ENCODE measurements at regions of chr1 and their contacts with region 1.

Region 1: GRCh38 chr1:172002725-172003345 is 161.5 kb downstream of the DNM3 start:
- DNase-seq: peak; percentile 40
- H3K4me3 ChIP-seq: no peak overlapping the region
- H3K27ac ChIP-seq: no peak overlapping the region
- H3K4me1 ChIP-seq: peaks cover 45% of the 10 kb centered on the region
- H3K27me3 ChIP-seq: no peaks in the 10 kb centered on the region
- CTCF ChIP-seq: peak; percentile 76 to 80

Region 2: DNA sequence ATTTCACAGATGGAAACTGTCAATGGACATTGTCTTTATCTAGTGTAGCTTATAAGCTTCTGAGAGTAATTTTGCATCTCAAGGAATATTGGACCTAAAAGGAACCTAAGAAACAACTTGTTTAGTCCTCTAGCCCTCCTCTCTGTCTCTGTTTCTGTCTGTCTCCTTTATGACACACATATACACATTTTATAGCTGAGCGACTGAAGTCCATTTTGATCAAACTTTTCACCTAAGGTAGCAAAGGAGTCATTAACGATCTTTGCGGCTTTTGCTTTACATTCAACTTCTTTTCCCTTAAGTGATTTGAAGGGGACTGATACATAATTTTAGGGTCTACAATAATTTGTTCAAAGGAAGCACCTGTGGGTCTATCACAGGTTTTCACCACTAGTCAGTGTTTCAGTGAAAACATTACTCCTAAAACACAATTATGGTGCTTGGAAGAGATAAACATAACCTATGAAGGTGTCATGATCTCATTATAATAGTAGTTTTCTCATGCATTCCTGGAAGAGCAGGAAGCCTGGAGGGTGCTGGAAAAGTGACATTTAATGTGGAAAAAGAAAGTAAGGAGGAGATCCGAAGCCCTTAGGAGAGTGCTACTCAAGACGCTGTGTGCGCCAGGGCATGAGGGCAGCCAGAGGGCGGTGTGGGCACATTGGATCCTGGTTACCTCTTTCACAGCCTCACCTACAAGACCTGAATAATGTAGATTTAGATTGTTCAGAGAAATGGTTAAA is 87.1 kb after region 1 on chr1:
- CTCF ChIA-PET with region 1: interaction called, 6 read pairs
- dilution Hi-C with region 1: no loop called
- in situ Hi-C with region 1: no loop called
- intact Hi-C with region 1: loop called (anchors 1 kb)
- DNase-seq: peak; percentile 53
- H3K4me3 ChIP-seq: no peak overlapping the region
- H3K27ac ChIP-seq: no peak overlapping the region
- H3K4me1 ChIP-seq: no peaks in the 10 kb centered on the region
- H3K27me3 ChIP-seq: no peaks in the 10 kb centered on the region
- CTCF ChIP-seq: peak; percentile 92 to 96

Region 3: GRCh38 chr1:172246521-172247390 is 243.9 kb after region 1 on chr1:
- CTCF ChIA-PET with region 1: no interaction called
- dilution Hi-C with region 1: no loop called
- in situ Hi-C with region 1: no loop called
- intact Hi-C with region 1: no loop called
- DNase-seq: no peak
- H3K4me3 ChIP-seq: no peak overlapping the region
- H3K27ac ChIP-seq: no peak overlapping the region
- H3K4me1 ChIP-seq: no peaks in the 10 kb centered on the region
- H3K27me3 ChIP-seq: no peaks in the 10 kb centered on the region
- CTCF ChIP-seq: no peak

Region 4: GRCh38 chr1:172373864-172374263 is 371.0 kb after region 1 on chr1:
- CTCF ChIA-PET with region 1: interaction called, 15 read pairs
- dilution Hi-C with region 1: no loop called
- in situ Hi-C with region 1: no loop called
- intact Hi-C with region 1: no loop called
- DNase-seq: peak; percentile 35
- H3K4me3 ChIP-seq: no peak overlapping the region
- H3K27ac ChIP-seq: no peak overlapping the region
- H3K4me1 ChIP-seq: peaks cover 7% of the 10 kb centered on the region
- H3K27me3 ChIP-seq: no peaks in the 10 kb centered on the region
- CTCF ChIP-seq: no peak

Region 5: DNA sequence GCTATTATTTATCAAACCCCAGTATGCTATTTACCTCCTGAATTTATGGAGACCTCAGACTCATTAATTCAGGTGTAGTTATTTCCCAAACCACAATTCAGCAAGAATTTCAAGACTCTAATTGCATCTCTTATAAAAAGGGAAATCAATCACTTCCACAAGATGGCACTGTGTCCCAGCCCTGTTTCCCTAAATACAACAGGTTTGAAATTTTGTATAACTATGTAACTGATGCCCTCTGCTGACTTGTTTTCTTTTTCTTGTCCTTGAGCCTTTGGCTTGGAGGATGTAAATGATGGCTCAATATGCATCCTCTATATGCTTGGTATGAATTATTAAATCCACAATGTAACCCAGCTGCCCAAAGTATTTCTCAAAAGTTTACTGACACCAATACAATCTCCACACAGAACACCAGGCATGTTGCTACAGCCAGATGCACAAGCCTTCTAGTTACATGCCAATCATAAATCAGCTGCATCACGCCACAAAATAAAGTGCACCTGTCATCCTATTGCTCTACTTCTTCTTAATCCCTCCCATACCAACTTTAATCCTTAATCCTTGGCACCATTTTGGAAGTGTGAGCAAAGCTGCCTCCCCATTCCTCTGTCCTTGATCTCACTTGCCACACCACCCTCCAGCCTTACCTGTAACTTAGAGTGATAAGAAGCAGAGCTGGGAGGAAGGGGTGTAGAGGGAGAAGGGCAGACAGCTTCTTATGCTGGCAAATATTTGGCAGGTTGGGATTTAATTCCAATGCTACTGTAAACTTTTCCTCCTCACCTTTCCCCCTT is 426.7 kb after region 1 on chr1:
- CTCF ChIA-PET with region 1: interaction called, 4 read pairs
- dilution Hi-C with region 1: no loop called
- in situ Hi-C with region 1: loop called in 1 of 2 experiments (anchors 25 kb)
- intact Hi-C with region 1: loop called (anchors 1 kb)
- DNase-seq: peak; percentile 64
- H3K4me3 ChIP-seq: no peak overlapping the region
- H3K27ac ChIP-seq: no peak overlapping the region
- H3K4me1 ChIP-seq: peaks cover 12% of the 10 kb centered on the region
- H3K27me3 ChIP-seq: no peaks in the 10 kb centered on the region
- CTCF ChIP-seq: peak; percentile 80 to 86

Region 6: DNA sequence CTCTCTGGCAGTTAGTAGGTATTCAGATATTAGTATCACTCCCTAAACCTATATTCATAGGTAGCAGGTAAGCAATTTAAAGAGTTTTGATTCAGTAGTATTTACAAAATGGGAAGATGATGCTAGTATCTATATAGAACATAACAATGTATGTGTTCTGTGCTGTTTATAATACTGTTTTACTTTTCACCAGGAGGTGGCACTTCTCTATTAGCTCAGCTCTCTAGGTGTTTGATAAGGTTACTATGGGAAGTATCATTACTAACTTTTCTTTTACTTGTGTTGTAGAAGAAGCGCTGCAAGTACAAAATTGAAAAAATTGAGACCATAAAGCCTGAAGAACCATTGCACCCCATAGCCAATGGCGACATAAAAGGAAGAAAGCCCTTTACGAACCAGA is 606.7 kb after region 1 on chr1:
- CTCF ChIA-PET with region 1: no interaction called
- dilution Hi-C with region 1: no loop called
- in situ Hi-C with region 1: no loop called
- intact Hi-C with region 1: loop called (anchors 10 kb)
- DNase-seq: peak; percentile 19
- H3K4me3 ChIP-seq: no peak overlapping the region
- H3K27ac ChIP-seq: no peak overlapping the region
- H3K4me1 ChIP-seq: peaks cover 4% of the 10 kb centered on the region
- H3K27me3 ChIP-seq: no peaks in the 10 kb centered on the region
- CTCF ChIP-seq: peak; percentile 39 to 56